Endothelial cell of umbilical vein (primary cell): ENCODE measurements at regions of chrX and their contacts with region 1.

Region 1: GRCh38 chrX:134423615-134424014 is 36.4 kb upstream of the HPRT1 start:
- DNase-seq: peak; percentile 35
- H3K4me3 ChIP-seq: no peak overlapping the region
- H3K27ac ChIP-seq: no peak overlapping the region
- H3K4me1 ChIP-seq: no peaks in the 10 kb centered on the region
- H3K27me3 ChIP-seq: no peaks in the 10 kb centered on the region
- CTCF ChIP-seq: peak in 1 of 2 donors; percentile 19
- POLR2A ChIP-seq: no peak

Region 2: DNA sequence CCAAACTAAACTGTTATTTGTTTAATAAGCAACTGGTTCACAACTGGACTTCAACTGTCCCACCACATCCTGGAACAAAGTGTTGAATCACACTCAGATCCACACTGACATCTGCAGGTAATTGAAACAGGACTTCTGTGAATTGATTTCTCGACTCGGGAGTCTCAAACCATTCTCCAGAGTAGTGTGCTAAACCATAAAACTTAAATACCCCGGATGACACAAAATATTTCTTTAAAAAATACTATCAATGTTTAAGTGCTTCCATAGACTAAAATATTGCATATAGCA is 330.0 kb after region 1 on chrX:
- CTCF ChIA-PET with region 1: no interaction called
- POLR2A ChIA-PET with region 1: no interaction called
- dilution Hi-C with region 1: no loop called
- intact Hi-C with region 1: loop called (anchors 10 kb)
- DNase-seq: peak; percentile 53
- H3K4me3 ChIP-seq: no peak overlapping the region
- H3K27ac ChIP-seq: no peak overlapping the region
- H3K4me1 ChIP-seq: no peaks in the 10 kb centered on the region
- H3K27me3 ChIP-seq: no peaks in the 10 kb centered on the region
- CTCF ChIP-seq: peak in 1 of 2 donors; percentile 5
- POLR2A ChIP-seq: no peak

Region 3: DNA sequence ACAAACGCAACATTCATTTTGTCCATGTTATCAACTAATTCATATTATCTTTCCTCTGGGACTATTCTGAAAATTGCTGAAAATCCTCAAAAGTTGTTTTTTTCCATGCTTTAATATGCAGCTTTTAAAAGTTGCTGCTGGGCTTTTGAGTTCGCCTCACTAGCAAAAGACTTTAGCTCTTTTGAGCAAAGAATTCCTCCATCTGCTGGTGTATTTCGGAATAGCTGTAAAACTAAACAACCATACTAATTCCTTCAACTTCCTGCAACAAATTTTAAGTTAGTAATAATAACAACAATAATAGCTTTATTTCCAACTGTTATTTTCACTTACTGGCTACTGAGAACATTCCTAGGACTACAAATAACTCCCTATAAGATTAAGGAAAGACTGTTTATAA is 359.2 kb after region 1 on chrX:
- CTCF ChIA-PET with region 1: interaction called, 3 read pairs
- POLR2A ChIA-PET with region 1: no interaction called
- dilution Hi-C with region 1: no loop called
- intact Hi-C with region 1: loop called (anchors 2 kb)
- DNase-seq: peak; percentile 54
- H3K4me3 ChIP-seq: no peak overlapping the region
- H3K27ac ChIP-seq: no peak overlapping the region
- H3K4me1 ChIP-seq: no peaks in the 10 kb centered on the region
- H3K27me3 ChIP-seq: no peaks in the 10 kb centered on the region
- CTCF ChIP-seq: peak; percentile 21 to 23
- POLR2A ChIP-seq: no peak

Region 4: DNA sequence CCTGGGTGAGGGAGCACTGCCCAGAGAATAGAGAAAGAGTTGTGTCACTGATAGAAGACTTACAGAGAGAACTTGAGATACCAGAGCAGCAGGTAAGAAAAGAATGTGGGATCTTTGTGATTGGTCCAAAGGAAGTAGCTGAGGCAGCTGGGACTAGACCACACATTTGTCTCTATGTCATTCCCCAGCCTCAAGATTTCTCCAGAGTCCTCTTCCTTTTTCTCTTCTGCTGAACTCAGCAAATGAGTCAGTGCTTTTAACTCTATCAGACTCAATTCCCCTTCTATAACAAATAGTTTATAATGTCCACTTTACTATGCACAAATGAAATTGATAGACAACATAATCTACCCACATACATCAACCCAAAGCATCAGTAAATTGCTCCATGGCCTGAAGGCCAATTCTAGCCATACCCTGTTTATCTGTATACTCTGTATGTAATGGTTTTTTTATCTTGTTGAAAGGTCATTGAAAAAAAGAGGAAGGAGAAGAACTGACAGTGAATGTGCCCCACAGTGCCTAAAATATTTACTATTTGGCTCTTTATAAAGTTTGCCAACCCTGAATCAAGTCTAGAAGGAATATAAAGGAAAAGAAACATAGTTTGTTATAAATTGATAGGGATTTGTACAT is 923.9 kb after region 1 on chrX:
- CTCF ChIA-PET with region 1: no interaction called
- POLR2A ChIA-PET with region 1: no interaction called
- dilution Hi-C with region 1: no loop called
- intact Hi-C with region 1: no loop called
- DNase-seq: no peak
- H3K4me3 ChIP-seq: no peak overlapping the region
- H3K27ac ChIP-seq: no peak overlapping the region
- H3K4me1 ChIP-seq: peaks cover 10% of the 10 kb centered on the region
- H3K27me3 ChIP-seq: no peaks in the 10 kb centered on the region
- CTCF ChIP-seq: no peak
- POLR2A ChIP-seq: no peak